RWPE1 (cell line): ENCODE measurements at regions of chr17 and their contacts with region 1.

Region 1: DNA sequence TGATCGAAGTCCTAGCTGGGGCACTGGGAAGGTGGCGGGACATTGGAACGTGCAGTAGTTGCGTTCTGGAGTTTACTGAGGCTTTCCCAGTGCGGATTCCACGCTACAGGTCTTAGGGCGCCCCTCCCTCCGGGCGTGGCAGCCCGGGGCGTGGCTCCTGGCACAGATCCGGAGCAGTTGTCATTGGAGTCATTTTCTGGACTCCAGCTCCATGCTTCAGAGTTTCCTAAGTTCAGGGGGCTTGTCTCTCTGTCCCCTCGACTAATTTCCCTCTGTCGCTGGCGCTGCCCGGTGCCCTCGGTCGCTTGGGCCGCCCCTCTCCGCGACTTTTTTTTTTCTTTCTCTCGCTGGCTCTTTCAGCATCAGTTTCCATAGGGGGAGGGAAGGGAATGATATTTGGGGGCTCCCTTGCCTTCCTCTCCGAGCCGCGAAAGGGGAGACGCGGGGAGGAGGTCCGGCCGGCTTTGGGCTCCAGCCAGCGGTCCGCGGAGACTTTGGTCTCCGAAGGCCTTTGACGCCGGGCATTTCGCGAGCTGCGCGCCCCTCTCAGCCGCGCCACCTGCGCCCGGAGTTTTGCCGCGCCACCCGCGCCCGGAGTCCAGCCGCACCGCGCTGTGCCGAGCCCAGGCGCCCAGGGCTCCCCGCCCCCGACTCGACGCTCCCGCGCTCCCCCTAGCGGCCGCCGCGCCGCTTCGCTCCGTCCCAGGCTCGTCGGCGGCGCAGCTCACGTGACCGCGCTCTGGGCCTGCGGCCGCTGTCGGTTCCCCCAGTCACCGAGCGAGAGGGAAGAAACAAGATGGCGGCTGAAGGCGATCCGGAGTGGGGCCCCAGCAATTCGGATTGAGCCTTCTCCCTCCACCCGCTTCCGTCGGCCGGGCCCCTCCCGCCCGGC is at the start of gene BPTF:
- DNase-seq: peak; percentile 81
- H3K27ac ChIP-seq: peak within 1 kb of the TSS; percentile 88
- CTCF ChIP-seq: peak; percentile 97

Region 2: GRCh38 chr17:67862614-67863217 is 37.7 kb after region 1 on chr17:
- CTCF ChIA-PET with region 1: no interaction called
- POLR2A ChIA-PET with region 1: no interaction called
- DNase-seq: no peak
- H3K27ac ChIP-seq: no peak overlapping the region
- CTCF ChIP-seq: no peak

Region 3: DNA sequence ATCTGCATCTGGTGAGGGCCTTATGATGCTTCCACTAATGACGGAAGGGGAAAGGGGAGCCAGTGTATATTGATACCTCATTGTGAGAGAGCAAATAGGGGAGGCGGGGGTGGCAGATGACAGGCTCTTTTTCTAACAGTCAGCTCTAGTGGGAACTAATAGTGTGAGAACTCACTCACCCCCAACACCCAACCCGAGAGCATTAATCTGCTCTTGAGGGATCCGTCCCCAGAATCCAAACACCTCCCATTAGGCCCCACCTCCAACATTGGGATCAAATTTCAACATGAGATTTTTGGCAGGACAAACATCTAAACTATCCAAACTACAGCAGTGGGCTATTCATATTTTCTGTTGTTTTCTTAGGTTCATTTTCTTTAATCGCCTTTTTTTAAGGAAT is 54.7 kb after region 1 on chr17:
- CTCF ChIA-PET with region 1: no interaction called
- POLR2A ChIA-PET with region 1: no interaction called
- DNase-seq: no peak
- H3K27ac ChIP-seq: no peak overlapping the region
- CTCF ChIP-seq: no peak

Region 4: DNA sequence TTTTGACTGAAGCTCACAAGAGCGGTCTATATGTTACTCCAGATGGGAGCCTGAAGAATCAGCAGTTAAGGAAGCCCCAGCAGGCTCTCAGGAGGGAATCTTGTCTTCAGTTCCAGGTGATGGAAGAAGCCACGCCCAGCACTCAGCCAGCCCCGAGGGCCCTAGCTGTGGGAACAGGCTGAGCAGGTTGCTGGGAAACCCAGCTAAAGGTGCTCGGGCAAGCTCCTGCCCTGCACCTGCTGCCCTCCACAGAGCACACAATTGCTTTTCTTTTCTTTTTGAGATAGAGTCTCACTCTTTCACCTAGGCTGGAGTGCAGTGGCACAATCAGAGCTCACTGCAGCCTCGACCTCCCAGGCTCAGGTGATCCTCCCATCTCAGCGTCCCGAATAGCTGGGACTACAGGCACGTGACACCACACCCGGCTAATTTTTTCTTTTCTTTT is 600.0 kb after region 1 on chr17:
- CTCF ChIA-PET with region 1: no interaction called
- POLR2A ChIA-PET with region 1: interaction called, 11 read pairs
- DNase-seq: peak; percentile 12
- H3K27ac ChIP-seq: no peak overlapping the region
- CTCF ChIP-seq: no peak